Right lobe of liver (tissue), 6 donors: ENCODE measurements at regions of chr9 and their contacts with region 1.

Region 1: GRCh38 chr9:104927912-104928740 is at the start of gene ABCA1:
- DNase-seq: peak; percentile 96 to 98 (median 97)
- ATAC-seq: peak; percentile 77 to 82 (median 79)
- H3K4me3 ChIP-seq: peak within 1 kb of the TSS; percentile 69 to 90 (median 81)
- H3K27ac ChIP-seq: peak within 1 kb of the TSS; percentile 78 to 80 (median 79)
- H3K4me1 ChIP-seq: peaks cover 0 to 33% (median 9%) of the 10 kb centered on the region in 4 donors
- H3K27me3 ChIP-seq: no peaks in the 10 kb centered on the region
- CTCF ChIP-seq: no peak
- POLR2A ChIP-seq: peak; percentile 94
- total RNA-seq, gene ABCA1: 45.8 to 107 (median 61.4) TPM

Region 2: DNA sequence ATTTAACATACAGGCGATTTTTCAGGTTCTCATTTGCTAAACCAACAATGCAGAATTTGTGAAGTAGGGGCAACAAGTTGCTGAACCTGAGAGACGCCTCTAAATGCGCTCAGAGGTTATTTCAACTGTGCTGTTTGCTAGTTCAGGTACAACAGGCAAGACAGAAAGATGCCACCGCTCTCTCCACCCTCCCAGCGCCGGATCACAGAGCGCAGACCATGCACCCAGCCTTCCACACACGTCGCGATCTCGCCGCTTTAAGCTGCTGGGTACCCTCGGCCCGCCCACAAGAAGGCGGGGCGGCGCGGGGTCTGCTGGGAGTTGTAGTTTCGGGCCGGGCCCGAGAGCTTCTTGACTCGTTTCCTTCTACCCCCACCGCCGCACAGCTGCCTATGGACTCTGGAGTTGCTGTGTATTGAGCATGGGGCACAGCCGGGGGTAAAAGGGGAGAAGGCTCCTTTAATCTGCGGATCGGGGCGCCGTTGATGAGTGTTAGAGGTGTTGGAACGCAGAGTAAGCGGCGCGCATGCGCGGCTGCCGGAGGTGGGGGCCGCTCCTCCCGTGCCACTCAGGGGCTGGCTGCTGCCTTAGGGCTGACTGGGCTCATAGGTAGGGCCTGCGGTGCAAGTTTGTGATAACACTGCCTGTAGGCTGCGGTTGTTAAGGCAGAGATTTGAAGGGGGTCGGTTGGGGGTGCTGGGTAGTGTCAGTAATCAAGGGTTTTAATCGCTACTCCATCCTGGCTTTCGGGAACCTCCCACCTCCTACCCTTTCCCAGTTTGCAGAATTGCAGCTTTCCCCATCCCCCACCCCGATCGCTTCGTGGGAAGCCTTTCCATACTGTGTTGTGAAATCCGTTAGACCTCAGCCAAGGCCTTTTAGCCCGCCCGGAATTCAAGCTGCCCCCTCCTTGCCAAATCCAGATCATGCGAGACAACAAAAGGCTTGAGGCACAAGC is 40.2 kb after region 1 on chr9:
- intact Hi-C with region 1: loop called (anchors 2 to 5 kb)
- DNase-seq: peak; percentile 90 to 92 (median 91)
- ATAC-seq: peak; percentile 95 to 97 (median 96)
- H3K4me3 ChIP-seq: peak overlapping the region; percentile 65 to 85 (median 71)
- H3K27ac ChIP-seq: peak overlapping the region; percentile 86 to 91 (median 90)
- H3K4me1 ChIP-seq: peaks cover 0 to 11% (median 2%) of the 10 kb centered on the region in 4 donors
- H3K27me3 ChIP-seq: no peaks in the 10 kb centered on the region
- CTCF ChIP-seq: no peak
- POLR2A ChIP-seq: peak; percentile 29